ENCODE measurements at regions of chr7 and their contacts with region 1.

Region 1: DNA sequence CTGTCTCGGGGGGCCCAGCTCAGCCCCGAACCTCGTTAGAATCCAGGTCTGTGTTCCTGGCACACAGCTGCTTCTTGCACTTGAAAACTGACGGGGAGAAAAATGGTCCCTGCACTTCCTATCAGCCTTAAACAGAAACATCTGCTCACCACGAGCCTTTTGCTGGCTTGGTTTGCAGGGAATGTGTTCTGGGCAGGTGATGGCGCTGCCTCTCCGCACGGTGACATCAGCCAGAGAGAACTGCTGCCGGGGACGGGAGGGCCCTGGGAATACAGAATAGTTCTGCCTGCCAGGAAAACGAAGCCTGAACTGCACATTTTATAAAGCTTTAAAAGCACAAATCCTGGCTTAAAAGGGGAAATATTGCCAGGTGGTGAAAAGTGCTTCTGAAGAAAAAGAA is 622.5 kb downstream of the TYW1 start:
- DNase-seq: no peak
- ATAC-seq: no peak

Region 2: DNA sequence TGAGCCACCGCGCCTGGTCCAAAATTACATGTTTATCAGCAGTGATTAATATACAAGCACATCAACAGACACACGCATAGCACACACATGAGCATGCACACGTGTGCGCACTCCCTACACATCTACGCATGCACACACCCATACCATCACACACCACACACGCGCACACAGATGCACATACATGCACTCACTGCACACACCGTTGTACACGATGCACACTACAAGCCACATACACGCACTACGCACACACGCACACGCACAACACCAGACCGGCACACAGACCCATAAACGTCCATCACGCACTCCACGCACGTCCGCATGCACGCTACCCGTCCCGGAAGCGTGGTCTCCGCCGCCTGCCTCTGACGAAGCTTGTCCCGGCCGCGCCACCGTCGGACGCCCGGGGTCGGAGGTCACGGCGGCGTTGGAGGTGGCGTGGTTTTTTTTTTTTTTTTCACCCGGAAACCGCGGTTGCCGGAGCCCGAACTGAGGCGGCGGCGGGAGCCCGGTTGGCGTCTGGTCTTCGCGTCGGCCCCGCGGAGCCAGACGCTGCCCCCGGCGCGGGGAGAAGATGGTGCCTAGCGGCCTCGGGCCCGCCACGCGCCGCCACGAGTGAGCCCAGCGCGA is 698.3 kb before region 1 on chr7 and contains the start of gene TMEM248:
- intact Hi-C with region 1: no loop called
- DNase-seq: peak; percentile 95
- ATAC-seq: peak; percentile 97
- total RNA-seq, gene TMEM248: 45.9 TPM

Region 3: DNA sequence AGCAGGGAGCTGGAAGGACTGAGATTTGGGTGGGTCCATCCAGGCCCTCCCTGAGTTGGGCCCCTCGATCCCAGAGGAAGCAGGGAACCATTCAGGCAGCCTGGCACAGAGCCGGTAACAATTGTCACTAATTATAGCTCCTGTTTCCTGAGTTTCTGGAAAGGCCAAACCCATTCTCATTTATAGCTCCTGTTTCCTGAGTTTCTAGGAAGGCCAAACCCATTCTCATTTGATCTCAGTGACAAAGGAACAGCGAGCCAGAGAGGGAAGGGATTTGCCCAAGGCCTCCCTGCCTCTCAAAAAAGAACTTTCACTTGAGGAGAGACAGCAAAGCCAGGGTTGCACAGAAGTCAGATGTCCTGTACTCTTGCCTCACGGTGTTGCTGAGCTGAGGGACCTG is 100.6 kb before region 1 on chr7:
- intact Hi-C with region 1: loop called (anchors 1 kb)
- DNase-seq: peak; percentile 71
- ATAC-seq: peak; percentile 76

Region 4: GRCh38 chr7:67777119-67777518 is 157.9 kb after region 1 on chr7:
- intact Hi-C with region 1: no loop called
- DNase-seq: no peak
- ATAC-seq: no peak